ENCODE measurements at regions of chr11 and their contacts with region 1.

Region 1: DNA sequence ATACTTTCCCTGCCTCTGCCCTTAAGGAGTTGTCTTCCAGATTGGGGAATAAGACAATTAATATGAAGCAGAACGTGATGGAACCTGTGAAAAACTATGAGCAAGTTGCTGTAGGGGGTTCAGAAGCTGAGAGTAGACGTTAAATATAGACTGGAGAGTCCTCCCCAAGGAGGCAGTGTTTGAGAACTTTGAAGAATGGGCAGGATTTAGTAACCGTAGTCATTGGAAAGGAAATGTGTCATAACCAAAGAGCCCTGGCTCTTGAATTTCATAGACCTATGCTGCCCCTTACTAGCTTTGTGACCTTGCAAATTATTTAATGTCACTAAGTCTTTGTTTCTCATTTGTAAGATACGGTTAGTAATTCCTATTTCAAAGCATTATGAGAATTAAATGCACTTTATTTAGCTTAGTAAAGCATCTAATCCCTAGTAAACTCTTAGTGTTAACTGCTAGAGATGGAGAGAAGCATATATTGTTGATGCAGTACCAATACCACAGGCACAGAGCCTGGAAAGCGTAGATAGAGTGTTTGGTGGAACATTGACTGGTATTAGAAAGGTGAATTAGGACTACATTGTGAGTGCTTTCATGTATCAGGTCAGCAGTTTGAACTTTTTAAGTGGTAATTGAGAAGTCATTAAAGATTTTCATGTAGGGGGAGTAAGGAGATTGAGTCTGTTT is 54.1 kb downstream of the MCAM start:
- DNase-seq: peak in 2 of 5 donors; percentile 9 to 21
- H3K4me3 ChIP-seq: peak overlapping the region in 1 of 2 donors; percentile 5
- H3K4me3 Mint-ChIP-seq: no peak overlapping the region
- H3K27ac ChIP-seq: peak overlapping the region; percentile 39
- H3K27ac Mint-ChIP-seq: no peak overlapping the region
- H3K4me1 ChIP-seq: peaks cover 94% of the 10 kb centered on the region
- H3K4me1 Mint-ChIP-seq: peaks cover 44 to 60% (median 49%) of the 10 kb centered on the region in 4 donors
- H3K27me3 ChIP-seq: no peaks in the 10 kb centered on the region
- H3K27me3 Mint-ChIP-seq: no peaks in the 10 kb centered on the region

Region 2: GRCh38 chr11:119229288-119229672 is 33.5 kb before region 1 on chr11:
- CTCF ChIA-PET with region 1: no interaction called
- POLR2A ChIA-PET with region 1: interaction called, 3 read pairs
- intact Hi-C with region 1: loop called (anchors 5 kb)
- DNase-seq: no peak
- H3K4me3 ChIP-seq: no peak overlapping the region
- H3K4me3 Mint-ChIP-seq: peak overlapping the region; percentile 3 to 86 (median 68)
- H3K27ac ChIP-seq: no peak overlapping the region
- H3K27ac Mint-ChIP-seq: peak overlapping the region; percentile 4 to 88 (median 70)
- H3K4me1 ChIP-seq: peaks cover 21% of the 10 kb centered on the region
- H3K4me1 Mint-ChIP-seq: peaks cover 35 to 71% (median 50%) of the 10 kb centered on the region in 4 donors
- H3K27me3 ChIP-seq: no peaks in the 10 kb centered on the region
- H3K27me3 Mint-ChIP-seq: no peaks in the 10 kb centered on the region

Region 3: DNA sequence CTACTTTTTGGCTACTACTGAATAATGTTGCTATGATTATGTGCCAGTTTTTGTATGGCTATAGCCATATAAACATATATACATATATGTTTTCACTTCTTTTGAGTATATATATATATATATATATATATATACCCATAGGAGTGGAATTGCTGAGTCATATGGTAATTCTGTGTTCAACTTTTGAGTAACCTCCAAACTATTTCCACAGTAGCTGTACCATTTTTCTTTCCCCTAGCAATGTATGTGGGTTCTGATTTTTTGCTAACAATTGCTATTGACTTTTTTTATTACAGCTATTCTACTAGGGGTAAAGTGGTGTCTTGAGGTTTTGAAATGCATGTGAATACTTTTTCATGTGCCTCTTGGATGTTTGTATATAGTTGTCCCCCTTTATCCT is 26.3 kb before region 1 on chr11:
- CTCF ChIA-PET with region 1: interaction called, 5 read pairs
- POLR2A ChIA-PET with region 1: interaction called, 9 read pairs
- intact Hi-C with region 1: loop called (anchors 2 kb)
- DNase-seq: no peak
- H3K4me3 ChIP-seq: no peak overlapping the region
- H3K4me3 Mint-ChIP-seq: no peak overlapping the region
- H3K27ac ChIP-seq: no peak overlapping the region
- H3K27ac Mint-ChIP-seq: peak overlapping the region in 2 of 7 donors; percentile 22 to 23
- H3K4me1 ChIP-seq: peaks cover 33% of the 10 kb centered on the region
- H3K4me1 Mint-ChIP-seq: peaks cover 30 to 54% (median 39%) of the 10 kb centered on the region in 4 donors
- H3K27me3 ChIP-seq: no peaks in the 10 kb centered on the region
- H3K27me3 Mint-ChIP-seq: no peaks in the 10 kb centered on the region

Region 4: DNA sequence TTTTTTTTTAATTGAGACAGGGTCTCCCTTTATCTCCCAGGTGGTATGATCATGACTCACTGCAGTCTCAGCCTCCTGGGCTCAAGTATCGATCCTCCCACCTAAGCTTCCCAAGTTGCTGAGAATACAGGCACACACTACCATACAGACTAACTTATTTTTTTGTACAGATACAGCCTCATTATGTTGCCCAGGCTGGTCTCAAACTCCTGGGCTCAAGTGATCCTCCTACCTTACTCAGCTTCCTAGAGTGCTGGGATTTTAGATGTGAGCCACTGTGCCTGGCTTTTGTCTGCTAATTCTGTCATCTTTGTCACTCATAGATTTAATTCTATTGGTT is 13.2 kb before region 1 on chr11:
- CTCF ChIA-PET with region 1: interaction called, 6 read pairs
- POLR2A ChIA-PET with region 1: interaction called, 10 read pairs
- intact Hi-C with region 1: no loop called
- DNase-seq: no peak
- H3K4me3 ChIP-seq: no peak overlapping the region
- H3K4me3 Mint-ChIP-seq: peak overlapping the region in 1 of 8 donors; percentile 26
- H3K27ac ChIP-seq: no peak overlapping the region
- H3K27ac Mint-ChIP-seq: peak overlapping the region in 5 of 7 donors; percentile 22 to 57 (median 47)
- H3K4me1 ChIP-seq: peaks cover 19% of the 10 kb centered on the region
- H3K4me1 Mint-ChIP-seq: peaks cover 21 to 32% (median 23%) of the 10 kb centered on the region in 4 donors
- H3K27me3 ChIP-seq: no peaks in the 10 kb centered on the region
- H3K27me3 Mint-ChIP-seq: no peaks in the 10 kb centered on the region

Measured in CD4-positive, alpha-beta memory T cell (primary cell).